CD4-positive, alpha-beta memory T cell (primary cell): ENCODE measurements at regions of chr20 and their contacts with region 1.

Region 1: DNA sequence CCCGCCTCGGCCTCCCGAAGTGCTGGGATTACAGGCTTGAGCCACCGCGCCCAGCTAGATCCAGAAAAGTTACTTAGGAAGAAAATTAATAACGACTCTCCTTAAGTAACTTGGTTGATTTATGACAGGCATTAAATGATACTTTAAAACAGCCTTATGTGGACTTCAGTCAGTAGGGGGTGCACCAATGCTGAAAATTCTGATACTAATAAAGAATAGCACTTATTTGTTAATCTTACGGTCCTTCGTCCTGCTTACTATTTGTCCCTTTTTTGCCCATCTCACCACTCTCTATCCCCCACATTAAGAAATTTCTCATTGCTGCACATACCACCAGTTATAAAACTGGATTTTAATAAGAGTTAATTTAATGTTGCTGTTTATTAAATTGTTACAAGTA is 12.7 kb upstream of the PRELID3B start:
- DNase-seq: peak in 4 of 5 donors; percentile 23 to 35 (median 27)
- H3K4me3 ChIP-seq: no peak overlapping the region
- H3K4me3 Mint-ChIP-seq: no peak overlapping the region
- H3K27ac ChIP-seq: no peak overlapping the region
- H3K27ac Mint-ChIP-seq: no peak overlapping the region
- H3K4me1 ChIP-seq: no peaks in the 10 kb centered on the region
- H3K4me1 Mint-ChIP-seq: no peaks in the 10 kb centered on the region
- H3K27me3 ChIP-seq: no peaks in the 10 kb centered on the region
- H3K27me3 Mint-ChIP-seq: peaks cover 4 to 25% of the 10 kb centered on the region in 2 donors

Region 2: GRCh38 chr20:59042796-59043660 is 12.3 kb before region 1 on chr20:
- CTCF ChIA-PET with region 1: interaction called, 12 read pairs
- POLR2A ChIA-PET with region 1: no interaction called
- intact Hi-C with region 1: no loop called
- DNase-seq: peak; percentile 92 to 96 (median 95)
- H3K4me3 ChIP-seq: peak overlapping the region; percentile 65 to 91
- H3K4me3 Mint-ChIP-seq: peak overlapping the region; percentile 84 to 95 (median 92)
- H3K27ac ChIP-seq: peak overlapping the region; percentile 92
- H3K27ac Mint-ChIP-seq: peak overlapping the region; percentile 91 to 97 (median 97)
- H3K4me1 ChIP-seq: peaks cover 50% of the 10 kb centered on the region
- H3K4me1 Mint-ChIP-seq: peaks cover 31 to 59% (median 48%) of the 10 kb centered on the region in 4 donors
- H3K27me3 ChIP-seq: no peaks in the 10 kb centered on the region
- H3K27me3 Mint-ChIP-seq: no peaks in the 10 kb centered on the region

Region 3: GRCh38 chr20:59403261-59403961 is 348.1 kb after region 1 on chr20:
- CTCF ChIA-PET with region 1: interaction called, 5 read pairs
- POLR2A ChIA-PET with region 1: no interaction called
- intact Hi-C with region 1: loop called (anchors 1 kb)
- DNase-seq: peak; percentile 50 to 75 (median 62)
- H3K4me3 ChIP-seq: peak overlapping the region in 1 of 2 donors; percentile 33
- H3K4me3 Mint-ChIP-seq: peak overlapping the region in 4 of 8 donors; percentile 49 to 77 (median 76)
- H3K27ac ChIP-seq: no peak overlapping the region
- H3K27ac Mint-ChIP-seq: peak overlapping the region in 2 of 7 donors; percentile 49 to 55
- H3K4me1 ChIP-seq: peaks cover 32% of the 10 kb centered on the region
- H3K4me1 Mint-ChIP-seq: peaks cover 0 to 4% (median under 1%) of the 10 kb centered on the region in 4 donors
- H3K27me3 ChIP-seq: no peaks in the 10 kb centered on the region
- H3K27me3 Mint-ChIP-seq: peaks cover 17 to 22% of the 10 kb centered on the region in 2 donors